Esophagus muscularis mucosa (tissue), 4 donors: ENCODE measurements at regions of chr15 and their contacts with region 1.

Region 1: GRCh38 chr15:31993062-31993461 is 37.3 kb upstream of the CHRNA7 start:
- DNase-seq: no peak
- H3K4me3 ChIP-seq: no peak overlapping the region
- H3K27ac ChIP-seq: no peak overlapping the region
- H3K4me1 ChIP-seq: no peaks in the 10 kb centered on the region
- H3K27me3 ChIP-seq: peaks cover 0 to 4% (median 0%) of the 10 kb centered on the region in 4 donors
- CTCF ChIP-seq: no peak
- EP300 ChIP-seq: no peak
- POLR2A ChIP-seq: no peak

Region 2: DNA sequence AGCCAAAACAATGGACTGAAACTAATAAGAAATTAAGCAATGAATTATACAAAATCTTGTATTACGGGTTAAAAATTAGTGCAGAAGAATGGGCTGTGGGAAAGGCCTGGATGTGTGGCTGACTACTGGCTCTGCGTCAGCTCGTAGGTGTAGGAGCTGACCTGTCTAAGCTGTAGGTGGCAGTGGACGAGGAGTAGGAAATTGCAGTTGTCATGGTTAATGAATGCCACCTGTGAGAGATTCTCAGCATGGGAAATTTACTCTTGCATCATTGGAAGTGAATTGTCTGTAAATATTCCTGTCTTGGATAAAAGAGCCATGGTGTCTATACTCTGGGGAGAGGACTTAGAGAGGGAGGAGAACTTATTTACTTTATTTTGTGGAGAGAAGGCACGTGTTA is 60.7 kb after region 1 on chr15:
- intact Hi-C with region 1: loop called (anchors 10 kb)
- DNase-seq: no peak
- H3K4me3 ChIP-seq: no peak overlapping the region
- H3K27ac ChIP-seq: no peak overlapping the region
- H3K4me1 ChIP-seq: no peaks in the 10 kb centered on the region
- H3K27me3 ChIP-seq: no peaks in the 10 kb centered on the region
- CTCF ChIP-seq: no peak
- EP300 ChIP-seq: no peak
- POLR2A ChIP-seq: no peak

Region 3: DNA sequence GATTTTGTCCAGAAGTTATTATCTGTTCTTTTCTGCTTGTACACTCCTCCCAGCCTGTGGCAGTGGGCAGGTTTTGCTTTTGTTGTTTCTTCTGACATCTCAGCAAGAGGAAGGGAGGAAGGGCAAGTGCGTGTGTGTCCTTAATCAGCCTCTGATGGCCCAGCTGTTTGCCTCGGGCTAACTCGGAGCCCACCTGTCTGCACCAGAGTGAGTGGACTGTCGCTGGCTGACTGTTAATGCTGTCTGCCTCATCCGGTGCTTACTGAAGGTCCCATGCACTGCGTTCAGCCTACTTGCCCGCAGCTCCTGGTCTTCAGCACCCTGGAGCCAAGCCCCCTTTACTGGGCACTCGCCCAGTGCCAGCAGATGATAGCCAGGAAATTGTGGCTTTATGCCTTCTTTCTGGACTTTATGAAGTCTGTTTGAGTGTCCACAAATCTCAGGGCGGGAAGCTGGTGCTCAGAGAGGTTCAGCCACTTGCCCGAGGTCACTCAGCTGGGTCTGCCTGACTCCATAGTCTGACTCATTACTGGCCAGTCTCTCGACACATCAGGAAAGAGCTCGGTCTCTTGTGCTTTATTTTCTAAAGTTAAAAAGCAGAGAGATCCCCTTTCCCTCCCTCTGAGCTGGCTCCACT is 126.8 kb after region 1 on chr15:
- intact Hi-C with region 1: no loop called
- DNase-seq: peak; percentile 86
- H3K4me3 ChIP-seq: no peak overlapping the region
- H3K27ac ChIP-seq: no peak overlapping the region
- H3K4me1 ChIP-seq: no peaks in the 10 kb centered on the region
- H3K27me3 ChIP-seq: no peaks in the 10 kb centered on the region
- CTCF ChIP-seq: no peak
- EP300 ChIP-seq: no peak
- POLR2A ChIP-seq: no peak

Region 4: DNA sequence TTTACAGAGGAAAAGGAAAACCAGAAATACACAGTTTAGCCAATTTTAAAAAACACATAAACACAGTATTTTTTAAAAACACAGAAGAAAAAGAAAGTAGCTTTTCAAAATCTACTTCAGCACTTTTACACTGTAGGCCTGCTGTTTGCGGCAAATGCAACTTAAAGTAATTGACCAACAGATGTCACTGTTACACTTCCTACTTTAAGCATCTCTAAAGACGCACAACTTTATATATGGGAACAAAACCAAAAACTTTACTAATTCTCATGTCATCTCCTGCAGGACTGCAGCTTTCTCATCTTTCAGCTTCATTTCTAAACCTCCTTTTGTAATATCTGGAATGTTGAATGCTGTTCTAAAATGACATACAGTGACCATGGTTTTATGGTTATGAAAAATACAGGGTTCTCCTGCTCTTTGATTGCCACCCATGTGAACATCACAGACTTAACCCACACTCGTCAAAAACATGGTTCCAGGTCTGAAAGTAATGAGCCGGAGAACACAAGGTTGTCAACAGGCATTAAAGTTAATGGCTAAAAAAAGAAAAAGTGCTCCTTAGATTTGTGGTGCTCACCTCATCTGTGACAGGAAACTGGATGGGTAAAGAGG is 1093.6 kb after region 1 on chr15:
- intact Hi-C with region 1: no loop called
- DNase-seq: no peak
- H3K4me3 ChIP-seq: no peak overlapping the region
- H3K27ac ChIP-seq: no peak overlapping the region
- H3K4me1 ChIP-seq: peaks cover 0 to 19% (median 16%) of the 10 kb centered on the region in 4 donors
- H3K27me3 ChIP-seq: no peaks in the 10 kb centered on the region
- CTCF ChIP-seq: peak; percentile 47 to 58 (median 55)
- EP300 ChIP-seq: no peak
- POLR2A ChIP-seq: no peak